ENCODE measurements at regions of chr2 and their contacts with region 1.

Region 1: GRCh38 chr2:237322564-237322963 is 91.4 kb downstream of the COL6A3 start:
- DNase-seq: no peak
- ATAC-seq: peak in 5 of 8 donors; percentile 23 to 30 (median 26)
- H3K4me3 ChIP-seq: no peak overlapping the region
- H3K27ac ChIP-seq: peak overlapping the region in 8 of 10 donors; percentile 33 to 76 (median 69)
- H3K4me1 ChIP-seq: peaks cover 5 to 58% (median 29%) of the 10 kb centered on the region in 9 donors
- H3K27me3 ChIP-seq: no peaks in the 10 kb centered on the region
- CTCF ChIP-seq: peak in 7 of 9 donors; percentile 34 to 47 (median 41)

Region 2: DNA sequence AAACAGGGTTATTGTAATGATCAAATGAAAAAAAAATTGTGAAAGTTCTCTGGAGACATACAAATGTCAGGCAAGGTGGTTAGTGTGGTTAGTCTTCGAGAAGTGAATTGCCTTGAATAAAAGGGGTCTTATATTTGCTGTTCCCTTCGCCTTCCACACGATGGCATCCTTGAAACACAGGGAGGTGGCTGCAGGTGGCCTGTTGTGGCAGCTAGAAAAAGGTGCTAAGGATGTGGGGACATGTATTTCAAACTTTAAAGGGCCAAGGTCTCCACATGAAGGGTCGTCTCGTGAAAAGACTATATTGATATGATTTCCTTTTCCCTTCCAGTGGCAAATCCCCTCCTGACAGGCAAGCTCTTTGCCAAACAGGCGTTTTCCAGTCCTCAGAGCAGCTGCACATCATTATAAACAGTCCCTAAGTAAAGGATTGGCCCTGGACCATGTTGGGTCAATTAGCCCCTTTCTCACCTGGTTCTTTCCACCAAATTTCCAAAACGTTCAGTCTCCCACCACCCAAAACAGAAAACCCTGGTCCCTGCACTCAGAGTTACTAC is 168.4 kb before region 1 on chr2:
- intact Hi-C with region 1: loop called in 1 of 10 experiments (anchors 10 kb)
- DNase-seq: no peak
- ATAC-seq: no peak
- H3K4me3 ChIP-seq: no peak overlapping the region
- H3K27ac ChIP-seq: peak overlapping the region in 5 of 10 donors; percentile 14 to 82 (median 76)
- H3K4me1 ChIP-seq: peaks cover 0 to 28% (median 7%) of the 10 kb centered on the region in 9 donors
- H3K27me3 ChIP-seq: peaks cover 0 to 7% (median 0%) of the 10 kb centered on the region in 7 donors
- CTCF ChIP-seq: peak; percentile 12 to 67 (median 63)

Region 3: GRCh38 chr2:237165405-237166276 is 156.9 kb before region 1 on chr2:
- intact Hi-C with region 1: loop called in 6 of 10 experiments (anchors 5 to 10 kb)
- DNase-seq: no peak
- ATAC-seq: peak in 3 of 8 donors; percentile 12 to 39 (median 33)
- H3K4me3 ChIP-seq: no peak overlapping the region
- H3K27ac ChIP-seq: peak overlapping the region in 7 of 10 donors; percentile 33 to 75 (median 47)
- H3K4me1 ChIP-seq: peaks cover 0 to 12% (median 5%) of the 10 kb centered on the region in 9 donors
- H3K27me3 ChIP-seq: no peaks in the 10 kb centered on the region
- CTCF ChIP-seq: peak; percentile 10 to 61 (median 54)